ENCODE measurements at regions of chr5 and their contacts with region 1.

Region 1: GRCh38 chr5:108345541-108346171 is 36.2 kb downstream of the FBXL17 start:
- DNase-seq: peak; percentile 5
- ATAC-seq: peak; percentile 86
- H3K4me3 ChIP-seq: no peak overlapping the region
- H3K27ac ChIP-seq: no peak overlapping the region
- H3K4me1 ChIP-seq: no peaks in the 10 kb centered on the region
- H3K27me3 ChIP-seq: no peaks in the 10 kb centered on the region
- CTCF ChIP-seq: peak; percentile 19 to 55 (median 30); a peak in 3 of 6 replicates
- EP300 ChIP-seq: no peak
- POLR2A ChIP-seq: no peak
- RAD21 ChIP-seq: peak; percentile 48

Region 2: DNA sequence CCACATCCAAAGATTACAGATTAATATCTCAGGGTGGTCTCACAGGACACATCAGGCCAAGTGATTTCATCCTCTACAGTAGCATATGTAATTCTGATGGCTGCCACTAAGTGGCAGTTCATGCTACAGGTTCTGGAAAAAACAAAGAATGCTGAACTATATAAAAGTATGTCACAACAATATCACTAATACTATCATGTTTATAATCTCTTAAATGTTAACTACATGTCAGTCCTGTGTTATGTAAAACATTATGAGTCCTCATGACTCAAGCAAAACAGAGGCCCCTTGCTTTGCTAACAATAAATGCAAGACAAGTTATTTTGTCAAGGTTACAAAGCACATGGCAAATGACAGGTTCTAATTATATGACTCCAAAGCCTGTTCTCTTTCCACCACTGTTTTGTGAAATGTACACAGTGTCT is 196.9 kb before region 1 on chr5:
- CTCF ChIA-PET with region 1: interaction called, 7 read pairs
- POLR2A ChIA-PET with region 1: no interaction called
- RAD21 ChIA-PET with region 1: interaction called, 4 read pairs
- SMC1A ChIA-PET with region 1: no interaction called
- in situ Hi-C with region 1: no loop called
- intact Hi-C with region 1: loop called (anchors 2 kb)
- DNase-seq: no peak
- ATAC-seq: peak; percentile 78
- H3K4me3 ChIP-seq: no peak overlapping the region
- H3K27ac ChIP-seq: no peak overlapping the region
- H3K4me1 ChIP-seq: no peaks in the 10 kb centered on the region
- H3K27me3 ChIP-seq: no peaks in the 10 kb centered on the region
- CTCF ChIP-seq: peak; percentile 54 to 62 (median 54)
- EP300 ChIP-seq: no peak
- POLR2A ChIP-seq: no peak
- RAD21 ChIP-seq: peak; percentile 46; the same call in 1 of the 2 replicates

Region 3: GRCh38 chr5:108266235-108266634 is 79.4 kb before region 1 on chr5:
- CTCF ChIA-PET with region 1: interaction called, 142 read pairs
- POLR2A ChIA-PET with region 1: no interaction called
- RAD21 ChIA-PET with region 1: interaction called, 81 read pairs
- SMC1A ChIA-PET with region 1: interaction called, 88 read pairs
- in situ Hi-C with region 1: no loop called
- intact Hi-C with region 1: loop called (anchors 2 kb)
- DNase-seq: no peak
- ATAC-seq: no peak
- H3K4me3 ChIP-seq: no peak overlapping the region
- H3K27ac ChIP-seq: no peak overlapping the region
- H3K4me1 ChIP-seq: no peaks in the 10 kb centered on the region
- H3K27me3 ChIP-seq: no peaks in the 10 kb centered on the region
- CTCF ChIP-seq: no peak
- EP300 ChIP-seq: no peak
- POLR2A ChIP-seq: no peak
- RAD21 ChIP-seq: no peak

Region 4: DNA sequence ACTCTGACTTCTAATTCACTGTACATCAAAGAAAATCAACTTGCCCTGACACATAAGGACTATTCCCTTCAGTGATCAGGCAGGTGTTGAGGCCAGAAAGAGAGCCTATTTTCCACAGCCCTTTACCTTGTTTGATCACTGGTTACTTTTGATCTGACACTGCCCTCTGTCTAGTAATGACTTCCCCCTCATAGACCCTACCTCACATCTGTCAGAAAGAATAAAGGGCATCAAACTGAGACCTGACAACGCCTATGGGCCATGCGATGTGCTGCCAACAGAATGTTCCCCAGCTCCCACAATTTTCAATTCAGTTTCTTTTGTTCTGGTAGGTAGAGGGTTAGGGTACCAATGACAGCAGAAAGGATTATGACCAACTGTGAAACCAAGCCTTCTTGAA is 11.4 kb before region 1 on chr5:
- CTCF ChIA-PET with region 1: interaction called, 15 read pairs
- POLR2A ChIA-PET with region 1: interaction called, 5 read pairs
- RAD21 ChIA-PET with region 1: interaction called, 3 read pairs
- SMC1A ChIA-PET with region 1: interaction called, 6 read pairs
- in situ Hi-C with region 1: no loop called
- intact Hi-C with region 1: no loop called
- DNase-seq: no peak
- ATAC-seq: peak; percentile 27; the same call in 2 of the 3 replicates
- H3K4me3 ChIP-seq: no peak overlapping the region
- H3K27ac ChIP-seq: no peak overlapping the region
- H3K4me1 ChIP-seq: no peaks in the 10 kb centered on the region
- H3K27me3 ChIP-seq: no peaks in the 10 kb centered on the region
- CTCF ChIP-seq: no peak
- EP300 ChIP-seq: no peak
- POLR2A ChIP-seq: no peak
- RAD21 ChIP-seq: no peak

Region 5: DNA sequence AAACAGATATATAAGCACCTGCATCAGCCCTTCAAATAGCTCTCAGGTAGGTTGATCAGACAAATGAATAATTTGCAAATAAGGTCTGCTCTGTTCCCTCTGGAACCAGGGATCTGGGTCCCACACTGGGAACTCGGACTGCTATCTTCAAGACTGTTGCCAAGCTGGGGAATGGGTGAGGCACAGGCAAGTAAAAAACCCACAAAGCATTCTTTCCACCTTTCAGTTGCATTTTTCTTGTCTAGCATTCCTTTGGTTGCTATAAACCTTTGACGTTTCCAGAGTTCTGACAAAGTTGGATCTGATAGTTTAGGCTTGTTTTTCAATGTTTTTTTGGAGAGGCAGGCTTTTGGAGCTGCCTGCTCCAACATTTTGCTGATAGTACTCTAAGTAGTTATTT is 16.1 kb after region 1 on chr5:
- CTCF ChIA-PET with region 1: interaction called, 19 read pairs
- POLR2A ChIA-PET with region 1: no interaction called
- RAD21 ChIA-PET with region 1: interaction called, 4 read pairs
- SMC1A ChIA-PET with region 1: interaction called, 5 read pairs
- in situ Hi-C with region 1: no loop called
- intact Hi-C with region 1: no loop called
- DNase-seq: no peak
- ATAC-seq: no peak
- H3K4me3 ChIP-seq: no peak overlapping the region
- H3K27ac ChIP-seq: no peak overlapping the region
- H3K4me1 ChIP-seq: no peaks in the 10 kb centered on the region
- H3K27me3 ChIP-seq: no peaks in the 10 kb centered on the region
- CTCF ChIP-seq: no peak
- EP300 ChIP-seq: no peak
- POLR2A ChIP-seq: no peak
- RAD21 ChIP-seq: no peak

Region 6: DNA sequence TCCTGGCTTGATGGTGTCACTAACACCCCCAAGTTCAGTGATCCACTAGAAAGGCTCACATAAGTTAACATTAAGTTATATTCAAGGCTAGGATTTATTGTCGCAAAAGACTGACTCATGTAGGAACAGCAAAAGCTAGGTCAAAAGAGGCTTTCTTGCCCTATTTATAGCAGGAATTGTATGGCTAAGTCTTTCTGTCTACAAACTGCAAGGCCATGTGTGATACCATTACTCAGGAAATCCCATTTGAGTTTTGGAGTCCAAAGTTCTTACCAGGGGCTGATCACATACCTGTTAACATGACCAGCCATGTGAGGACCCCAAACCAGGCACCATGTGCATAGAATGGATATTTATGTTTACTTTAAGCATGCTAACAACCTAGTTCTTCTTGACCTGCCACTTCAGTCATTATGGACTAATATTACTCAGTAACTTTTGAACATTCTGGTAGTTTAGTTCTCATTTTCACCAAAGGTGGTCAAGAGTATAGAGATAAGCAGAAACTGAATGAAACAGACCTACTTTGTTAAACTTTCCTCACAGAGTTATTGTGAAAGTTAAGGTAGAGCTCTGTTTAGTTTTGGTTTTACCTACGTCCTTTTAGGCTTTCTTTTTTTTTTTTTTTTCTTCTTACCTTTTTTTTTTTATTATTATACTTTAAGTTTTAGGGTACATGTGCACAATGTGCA is 683.1 kb after region 1 on chr5:
- CTCF ChIA-PET with region 1: no interaction called
- POLR2A ChIA-PET with region 1: no interaction called
- RAD21 ChIA-PET with region 1: no interaction called
- SMC1A ChIA-PET with region 1: no interaction called
- in situ Hi-C with region 1: no loop called
- intact Hi-C with region 1: no loop called
- DNase-seq: no peak
- ATAC-seq: peak; percentile 83
- H3K4me3 ChIP-seq: no peak overlapping the region
- H3K27ac ChIP-seq: peak overlapping the region; percentile 6; the same call in 1 of the 2 replicates
- H3K4me1 ChIP-seq: peaks cover 10% of the 10 kb centered on the region
- H3K27me3 ChIP-seq: no peaks in the 10 kb centered on the region
- CTCF ChIP-seq: no peak
- EP300 ChIP-seq: no peak
- POLR2A ChIP-seq: no peak
- RAD21 ChIP-seq: no peak

Measured in GM12878 (cell line).